ENCODE measurements at regions of chr12 and their contacts with region 1.

Region 1: DNA sequence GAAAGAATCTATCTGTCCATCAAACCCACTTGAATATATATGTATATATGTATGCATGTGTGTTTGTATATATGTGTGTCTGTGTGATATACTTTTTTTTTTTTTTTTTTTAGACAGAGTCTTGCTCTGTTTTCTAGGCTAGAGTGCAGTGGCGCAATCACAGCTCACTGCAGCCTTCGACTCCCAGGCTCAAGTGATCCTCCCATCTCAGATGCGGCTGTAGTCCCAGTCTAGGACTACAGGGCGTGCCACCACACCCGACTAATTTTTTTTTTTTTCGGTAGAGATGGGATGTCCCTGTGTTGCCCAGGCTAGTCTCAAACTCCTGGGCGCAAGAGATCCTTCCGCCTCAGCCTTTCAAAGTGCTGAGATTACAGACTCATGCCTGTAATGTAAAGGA is 13.0 kb upstream of the APOBEC1 start:
- DNase-seq: no peak
- ATAC-seq: no peak
- H3K4me3 ChIP-seq: no peak overlapping the region
- H3K27ac ChIP-seq: no peak overlapping the region
- H3K4me1 ChIP-seq: peaks cover 0 to 5% (median 0%) of the 10 kb centered on the region in 9 donors
- H3K27me3 ChIP-seq: peaks cover 0 to 19% (median 8%) of the 10 kb centered on the region in 7 donors
- CTCF ChIP-seq: no peak

Region 2: DNA sequence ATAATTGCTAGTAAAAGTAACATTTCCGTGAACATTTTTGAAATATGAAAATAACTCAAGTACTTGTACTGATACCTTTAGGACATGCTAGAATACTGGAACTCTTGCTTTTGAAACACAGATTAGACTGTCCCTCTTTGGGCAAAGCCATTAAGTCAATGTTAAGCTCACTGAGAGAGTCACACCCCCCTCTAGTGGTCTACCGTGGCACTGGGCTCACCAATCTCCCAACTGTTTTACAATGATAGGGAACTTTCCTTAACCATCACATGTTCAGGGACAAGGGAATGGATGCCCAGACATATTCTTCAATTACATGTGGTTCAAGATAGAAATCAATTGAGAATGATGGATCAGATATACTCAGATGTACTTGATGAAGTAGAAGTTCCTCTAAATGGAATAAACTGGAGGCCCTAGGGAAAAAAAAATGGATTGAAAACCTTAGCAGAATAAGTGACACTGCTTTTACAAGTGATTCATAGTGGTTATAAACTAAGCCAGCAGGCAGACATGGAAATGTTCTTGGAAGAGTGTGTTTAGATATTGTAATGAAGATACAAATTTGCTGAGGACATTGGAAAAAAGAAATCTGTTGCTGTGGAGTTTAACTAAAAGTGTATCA is 128.2 kb after region 1 on chr12:
- intact Hi-C with region 1: loop called (anchors 1 to 10 kb)
- DNase-seq: peak; percentile 25 to 62
- ATAC-seq: peak in 7 of 8 donors; percentile 50 to 82 (median 70)
- H3K4me3 ChIP-seq: no peak overlapping the region
- H3K27ac ChIP-seq: no peak overlapping the region
- H3K4me1 ChIP-seq: peaks cover 0 to 4% (median 0%) of the 10 kb centered on the region in 9 donors
- H3K27me3 ChIP-seq: peaks cover 0 to 31% (median 0%) of the 10 kb centered on the region in 7 donors
- CTCF ChIP-seq: peak; percentile 69 to 92 (median 87)

Measured in heart right ventricle (tissue), 16 donors.